ENCODE measurements at regions of chr15 and their contacts with region 1.

Region 1: GRCh38 chr15:94324117-94324826 is 92.9 kb downstream of the MCTP2 start:
- DNase-seq: peak; percentile 68
- H3K4me3 ChIP-seq: peak overlapping the region in 1 of 2 experiments; percentile 38; a peak in 1 of 4 replicates
- H3K27ac ChIP-seq: peak overlapping the region in 1 of 2 experiments; percentile 56; a peak in 1 of 4 replicates
- H3K4me1 ChIP-seq: peaks cover 0 to 3% of the 10 kb centered on the region in 2 experiments; a peak in 2 of 4 replicates
- H3K27me3 ChIP-seq: no peaks in the 10 kb centered on the region
- CTCF ChIP-seq: peak; percentile 94
- EP300 ChIP-seq: no peak
- RAD21 ChIP-seq: peak; percentile 98

Region 2: GRCh38 chr15:94145046-94145445 is 179.2 kb before region 1 on chr15:
- CTCF ChIA-PET with region 1: interaction called, 10 read pairs
- POLR2A ChIA-PET with region 1: no interaction called
- DNase-seq: no peak
- H3K4me3 ChIP-seq: no peak overlapping the region
- H3K27ac ChIP-seq: no peak overlapping the region
- H3K4me1 ChIP-seq: no peaks in the 10 kb centered on the region
- H3K27me3 ChIP-seq: no peaks in the 10 kb centered on the region
- CTCF ChIP-seq: no peak
- EP300 ChIP-seq: no peak
- RAD21 ChIP-seq: no peak

Region 3: DNA sequence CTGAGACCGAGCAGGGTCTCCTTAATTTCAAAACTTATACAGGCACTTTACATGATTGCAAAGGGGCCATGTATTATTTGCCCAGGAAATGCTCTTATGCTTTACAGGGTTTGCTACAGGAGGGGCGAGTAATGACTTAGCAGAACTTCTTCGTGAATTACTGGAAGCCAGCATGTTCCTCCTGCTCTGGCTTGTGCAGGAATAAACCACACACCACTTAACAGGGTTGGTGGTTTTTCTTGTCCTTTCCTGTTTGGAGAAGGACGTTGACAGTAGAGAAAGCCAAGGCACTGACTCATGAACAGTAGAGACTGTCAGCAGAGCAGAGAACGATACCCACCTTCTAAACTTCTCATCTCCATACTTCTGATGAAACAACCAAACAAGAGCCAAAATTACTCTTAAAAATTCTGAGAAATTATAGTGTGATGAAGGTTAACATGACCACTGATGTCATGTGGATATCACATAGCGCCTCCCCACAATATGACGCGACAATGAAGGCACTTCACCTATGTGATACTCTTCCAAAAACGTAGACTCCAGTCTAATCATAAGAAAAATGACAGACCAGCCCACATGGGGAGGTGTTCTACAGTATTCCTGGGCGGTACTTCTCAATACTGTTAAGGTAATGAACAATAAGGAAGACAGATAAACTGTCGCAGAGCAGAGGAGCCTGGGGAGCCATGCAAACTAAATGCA is 117.7 kb before region 1 on chr15:
- CTCF ChIA-PET with region 1: no interaction called
- POLR2A ChIA-PET with region 1: no interaction called
- DNase-seq: no peak
- H3K4me3 ChIP-seq: no peak overlapping the region
- H3K27ac ChIP-seq: no peak overlapping the region
- H3K4me1 ChIP-seq: no peaks in the 10 kb centered on the region
- H3K27me3 ChIP-seq: no peaks in the 10 kb centered on the region
- CTCF ChIP-seq: no peak
- EP300 ChIP-seq: no peak
- RAD21 ChIP-seq: no peak

Region 4: DNA sequence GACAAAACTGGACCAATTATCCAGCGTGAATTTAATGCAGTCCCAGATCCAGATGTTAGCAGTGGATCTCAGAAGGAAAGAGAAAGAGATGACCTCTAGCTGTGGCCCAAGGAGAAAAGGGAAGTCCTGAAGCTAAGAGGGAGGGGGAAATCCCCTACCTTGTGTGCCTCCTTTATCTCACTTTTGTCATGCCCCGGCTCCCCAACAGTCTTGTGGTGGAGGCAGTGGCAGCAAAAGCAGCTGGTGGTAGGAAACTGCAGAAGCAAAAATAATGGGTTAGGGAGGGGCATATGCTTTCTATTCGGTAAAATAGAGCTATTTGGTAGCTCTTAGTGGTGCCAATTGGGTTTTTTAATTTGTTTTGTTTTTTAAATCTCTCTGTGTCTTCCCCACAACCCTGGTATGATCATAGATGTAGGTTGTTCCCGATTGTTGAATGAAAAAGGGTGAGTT is 36.5 kb before region 1 on chr15:
- CTCF ChIA-PET with region 1: interaction called, 34 read pairs
- POLR2A ChIA-PET with region 1: no interaction called
- DNase-seq: peak; percentile 14
- H3K4me3 ChIP-seq: no peak overlapping the region
- H3K27ac ChIP-seq: peak overlapping the region in 1 of 2 experiments; percentile 94; a peak in 2 of 4 replicates
- H3K4me1 ChIP-seq: peaks cover 0 to 22% of the 10 kb centered on the region in 2 experiments; a peak in 2 of 4 replicates
- H3K27me3 ChIP-seq: no peaks in the 10 kb centered on the region
- CTCF ChIP-seq: no peak
- EP300 ChIP-seq: no peak
- RAD21 ChIP-seq: no peak

Region 5: GRCh38 chr15:94306700-94307650 is 17.3 kb before region 1 on chr15:
- CTCF ChIA-PET with region 1: interaction called, 13 read pairs
- POLR2A ChIA-PET with region 1: no interaction called
- DNase-seq: no peak
- H3K4me3 ChIP-seq: no peak overlapping the region
- H3K27ac ChIP-seq: no peak overlapping the region
- H3K4me1 ChIP-seq: no peaks in the 10 kb centered on the region
- H3K27me3 ChIP-seq: no peaks in the 10 kb centered on the region
- CTCF ChIP-seq: no peak
- EP300 ChIP-seq: no peak
- RAD21 ChIP-seq: no peak

Region 6: GRCh38 chr15:94346282-94346681 is 22.0 kb after region 1 on chr15:
- CTCF ChIA-PET with region 1: interaction called, 26 read pairs
- POLR2A ChIA-PET with region 1: no interaction called
- DNase-seq: no peak
- H3K4me3 ChIP-seq: no peak overlapping the region
- H3K27ac ChIP-seq: no peak overlapping the region
- H3K4me1 ChIP-seq: no peaks in the 10 kb centered on the region; a peak in 1 of 4 replicates
- H3K27me3 ChIP-seq: no peaks in the 10 kb centered on the region
- CTCF ChIP-seq: no peak
- EP300 ChIP-seq: no peak
- RAD21 ChIP-seq: peak; percentile 20; the same call in 1 of the 2 replicates

Measured in SK-N-SH (cell line).